Testis (tissue), 5 donors: ENCODE measurements at regions of chr16 and their contacts with region 1.

Region 1: GRCh38 chr16:67428146-67428731 is 2.7 kb upstream of the HSD11B2 start:
- DNase-seq: peak; percentile 81
- H3K4me3 ChIP-seq: no peak overlapping the region
- H3K27ac ChIP-seq: no peak overlapping the region
- H3K4me1 ChIP-seq: peaks cover 37% of the 10 kb centered on the region
- H3K27me3 ChIP-seq: no peaks in the 10 kb centered on the region
- CTCF ChIP-seq: peak; percentile 65 to 75 (median 73)
- POLR2A ChIP-seq: no peak

Region 2: GRCh38 chr16:67268136-67268579 is 160.1 kb before region 1 on chr16:
- intact Hi-C with region 1: no loop called
- DNase-seq: no peak
- H3K4me3 ChIP-seq: no peak overlapping the region
- H3K27ac ChIP-seq: no peak overlapping the region
- H3K4me1 ChIP-seq: no peaks in the 10 kb centered on the region
- H3K27me3 ChIP-seq: no peaks in the 10 kb centered on the region
- CTCF ChIP-seq: no peak
- POLR2A ChIP-seq: no peak

Region 3: DNA sequence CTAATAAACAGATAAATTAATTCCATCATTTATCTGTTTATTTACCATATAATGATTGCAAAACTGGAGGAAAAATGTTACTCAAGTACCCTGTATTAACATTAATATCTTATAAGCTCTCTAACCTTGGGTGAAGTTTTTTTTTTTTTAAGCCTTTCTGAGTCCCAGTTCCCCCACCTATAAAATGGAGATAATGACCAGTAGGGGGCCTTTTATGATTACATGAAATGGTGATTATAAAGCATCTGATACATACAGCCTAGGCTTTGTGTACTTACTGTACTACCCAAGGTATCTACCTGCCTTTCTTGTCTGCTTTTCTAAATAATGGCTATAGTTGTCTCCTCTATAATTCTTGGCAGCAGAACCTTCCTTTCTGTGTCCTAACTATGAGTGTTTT is 79.1 kb before region 1 on chr16:
- intact Hi-C with region 1: no loop called
- DNase-seq: no peak
- H3K4me3 ChIP-seq: no peak overlapping the region
- H3K27ac ChIP-seq: no peak overlapping the region
- H3K4me1 ChIP-seq: no peaks in the 10 kb centered on the region
- H3K27me3 ChIP-seq: no peaks in the 10 kb centered on the region
- CTCF ChIP-seq: peak in 1 of 3 experiments; percentile 47
- POLR2A ChIP-seq: no peak

Region 4: DNA sequence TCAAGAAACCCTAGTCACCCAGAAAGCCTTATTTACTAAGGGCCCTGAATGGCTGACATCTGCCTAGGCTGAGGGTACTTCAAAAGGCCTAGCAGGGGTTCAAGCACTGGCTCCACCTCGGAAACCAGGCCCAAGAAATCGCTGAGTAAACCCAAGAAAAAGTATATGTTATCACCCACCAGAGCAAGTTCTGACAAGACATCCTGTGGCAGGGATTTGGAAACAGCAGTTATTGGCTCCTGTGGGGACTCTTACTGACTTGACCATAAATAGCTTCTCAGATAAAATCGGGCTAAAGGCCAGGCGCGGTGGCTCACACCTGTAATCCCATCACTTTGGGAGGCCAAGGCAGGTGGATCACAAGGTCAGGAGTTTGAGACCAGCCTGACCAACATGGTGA is 40.5 kb after region 1 on chr16:
- intact Hi-C with region 1: loop called (anchors 5 kb)
- DNase-seq: no peak
- H3K4me3 ChIP-seq: no peak overlapping the region
- H3K27ac ChIP-seq: no peak overlapping the region
- H3K4me1 ChIP-seq: peaks cover 28% of the 10 kb centered on the region
- H3K27me3 ChIP-seq: no peaks in the 10 kb centered on the region
- CTCF ChIP-seq: no peak
- POLR2A ChIP-seq: no peak

Region 5: GRCh38 chr16:67542464-67543435 is 114.5 kb after region 1 on chr16:
- intact Hi-C with region 1: no loop called
- DNase-seq: no peak
- H3K4me3 ChIP-seq: no peak overlapping the region
- H3K27ac ChIP-seq: no peak overlapping the region
- H3K4me1 ChIP-seq: peaks cover 26% of the 10 kb centered on the region
- H3K27me3 ChIP-seq: no peaks in the 10 kb centered on the region
- CTCF ChIP-seq: no peak
- POLR2A ChIP-seq: no peak